ENCODE measurements at regions of chr4 and their contacts with region 1.

Region 1: GRCh38 chr4:185471235-185472102 is at the start of gene CCDC110:
- DNase-seq: peak; percentile 93
- H3K4me3 Mint-ChIP-seq: peak within 1 kb of the TSS; percentile 84
- H3K27ac Mint-ChIP-seq: peak within 1 kb of the TSS; percentile 26
- H3K4me1 Mint-ChIP-seq: peaks cover 2% of the 10 kb centered on the region
- H3K27me3 Mint-ChIP-seq: peaks cover 4% of the 10 kb centered on the region
- total RNA-seq, gene CCDC110: 0.25 to 0.57 TPM

Region 2: GRCh38 chr4:185203486-185204237 is 267.8 kb before region 1 on chr4 and contains the start of gene CFAP97:
- CTCF ChIA-PET with region 1: no interaction called
- intact Hi-C with region 1: loop called (anchors 1 kb)
- DNase-seq: peak; percentile 73
- H3K4me3 Mint-ChIP-seq: peak within 1 kb of the TSS; percentile 96
- H3K27ac Mint-ChIP-seq: peak within 1 kb of the TSS; percentile 96
- H3K4me1 Mint-ChIP-seq: peaks cover 32% of the 10 kb centered on the region
- H3K27me3 Mint-ChIP-seq: no peaks in the 10 kb centered on the region
- total RNA-seq, gene CFAP97: 38.4 to 43.6 TPM

Region 3: GRCh38 chr4:185425647-185426352 is 45.7 kb before region 1 on chr4 and contains the start of gene UFSP2:
- CTCF ChIA-PET with region 1: no interaction called
- intact Hi-C with region 1: loop called (anchors 1 kb)
- DNase-seq: peak; percentile 86
- H3K4me3 Mint-ChIP-seq: peak within 1 kb of the TSS; percentile 76
- H3K27ac Mint-ChIP-seq: peak within 1 kb of the TSS; percentile 96
- H3K4me1 Mint-ChIP-seq: peaks cover 28% of the 10 kb centered on the region
- H3K27me3 Mint-ChIP-seq: peaks cover 1% of the 10 kb centered on the region
- total RNA-seq, gene UFSP2: 24.4 to 30.7 TPM

Region 4: DNA sequence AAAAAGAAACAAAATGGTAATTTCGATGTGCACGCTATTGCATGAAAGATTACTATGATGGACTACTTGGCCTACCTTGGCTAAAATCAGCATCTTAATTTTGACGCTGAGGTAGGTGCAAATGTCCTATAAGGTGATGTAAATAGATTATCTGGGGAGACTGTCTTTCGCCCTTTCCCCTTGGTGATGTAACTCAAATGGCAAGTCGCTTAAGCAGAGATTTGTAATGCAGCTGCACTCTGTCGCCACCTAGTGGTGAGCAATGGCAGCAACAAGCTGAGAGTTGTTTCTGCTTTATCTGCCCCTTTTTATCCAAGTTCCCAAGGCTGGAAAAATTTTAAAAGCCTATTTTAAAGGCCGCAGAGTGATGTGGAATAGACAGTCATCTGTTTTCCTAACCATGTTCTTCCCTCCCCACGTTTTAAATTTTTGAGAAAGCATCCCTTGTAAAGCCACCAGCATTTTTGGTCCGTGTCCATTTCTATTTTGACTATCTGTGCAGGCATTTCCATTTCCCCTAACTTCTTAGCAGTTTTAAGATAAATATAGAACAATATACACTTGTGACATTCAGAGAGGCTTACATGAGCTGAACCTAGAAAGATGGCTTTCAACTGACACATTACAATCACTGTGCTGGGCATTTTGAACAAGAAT is 126.2 kb after region 1 on chr4:
- CTCF ChIA-PET with region 1: interaction called, 3 read pairs
- intact Hi-C with region 1: loop called (anchors 1 kb)
- DNase-seq: peak; percentile 84
- H3K4me3 Mint-ChIP-seq: no peak overlapping the region
- H3K27ac Mint-ChIP-seq: no peak overlapping the region
- H3K4me1 Mint-ChIP-seq: no peaks in the 10 kb centered on the region
- H3K27me3 Mint-ChIP-seq: peaks cover 13% of the 10 kb centered on the region

Region 5: GRCh38 chr4:185792384-185793115 is 321.1 kb after region 1 on chr4:
- CTCF ChIA-PET with region 1: no interaction called
- intact Hi-C with region 1: no loop called
- DNase-seq: no peak
- H3K4me3 Mint-ChIP-seq: no peak overlapping the region
- H3K27ac Mint-ChIP-seq: no peak overlapping the region
- H3K4me1 Mint-ChIP-seq: peaks cover 3% of the 10 kb centered on the region
- H3K27me3 Mint-ChIP-seq: peaks cover 6% of the 10 kb centered on the region

Region 6: GRCh38 chr4:186169945-186170802 is 698.7 kb after region 1 on chr4:
- CTCF ChIA-PET with region 1: no interaction called
- intact Hi-C with region 1: no loop called
- DNase-seq: no peak
- H3K4me3 Mint-ChIP-seq: no peak overlapping the region
- H3K27ac Mint-ChIP-seq: no peak overlapping the region
- H3K4me1 Mint-ChIP-seq: no peaks in the 10 kb centered on the region
- H3K27me3 Mint-ChIP-seq: no peaks in the 10 kb centered on the region

Region 7: GRCh38 chr4:186191200-186192065 is 720.0 kb after region 1 on chr4 and contains the start of gene CYP4V2:
- CTCF ChIA-PET with region 1: no interaction called
- intact Hi-C with region 1: loop called (anchors 2 kb)
- DNase-seq: peak; percentile 88
- H3K4me3 Mint-ChIP-seq: peak within 1 kb of the TSS; percentile 86
- H3K27ac Mint-ChIP-seq: peak within 1 kb of the TSS; percentile 92
- H3K4me1 Mint-ChIP-seq: peaks cover 33% of the 10 kb centered on the region
- H3K27me3 Mint-ChIP-seq: no peaks in the 10 kb centered on the region
- total RNA-seq, gene CYP4V2: 3.3 TPM